Activated naive CD4-positive, alpha-beta T cell treated with anti-CD3 and anti-CD28 coated beads for 36 hours (primary cell): ENCODE measurements at regions of chr13 and their contacts with region 1.

Region 1: DNA sequence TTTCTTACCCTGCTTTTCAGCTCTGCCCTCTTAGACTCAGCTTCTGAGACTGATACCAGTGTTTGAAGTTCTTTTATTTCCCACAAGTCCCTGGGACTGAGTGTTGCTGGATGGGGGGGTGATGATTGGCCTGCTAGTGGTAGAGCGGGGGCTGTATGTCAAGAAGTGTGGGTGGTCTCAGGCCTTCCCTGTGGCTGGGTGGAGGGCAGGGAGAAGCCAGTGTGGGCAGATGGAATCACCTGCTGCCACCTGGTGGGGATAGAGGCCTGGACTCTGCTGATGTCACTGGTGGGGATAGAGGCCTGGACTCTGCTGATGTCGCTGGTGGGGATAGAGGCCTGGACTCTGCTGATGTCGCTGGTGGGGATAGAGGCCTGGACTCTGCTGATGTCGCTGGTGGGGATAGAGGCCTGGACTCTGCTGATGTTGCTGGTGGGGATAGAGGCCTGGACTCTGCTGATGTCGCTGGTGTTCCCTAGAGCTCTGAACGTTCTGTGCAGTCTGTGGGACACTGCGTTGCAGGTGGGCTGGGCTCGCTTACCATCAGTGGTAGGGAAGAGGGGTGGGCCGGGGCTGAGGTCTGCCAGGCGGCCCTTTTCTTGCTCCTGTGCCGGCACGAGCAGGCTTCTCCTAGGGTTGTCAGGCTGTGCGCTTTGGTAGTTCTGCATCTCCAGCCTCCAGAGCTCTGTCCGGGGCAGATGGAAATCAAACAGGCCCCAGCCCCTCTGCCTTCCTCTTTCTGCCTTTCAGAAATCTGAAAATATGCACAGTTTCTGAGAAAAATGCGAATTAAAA is 101.3 kb downstream of the ARHGEF7 start:
- DNase-seq: peak; percentile 62
- H3K4me3 Mint-ChIP-seq: no peak overlapping the region
- H3K27ac Mint-ChIP-seq: no peak overlapping the region
- H3K4me1 Mint-ChIP-seq: peaks cover 27% of the 10 kb centered on the region
- H3K27me3 Mint-ChIP-seq: no peaks in the 10 kb centered on the region

Region 2: DNA sequence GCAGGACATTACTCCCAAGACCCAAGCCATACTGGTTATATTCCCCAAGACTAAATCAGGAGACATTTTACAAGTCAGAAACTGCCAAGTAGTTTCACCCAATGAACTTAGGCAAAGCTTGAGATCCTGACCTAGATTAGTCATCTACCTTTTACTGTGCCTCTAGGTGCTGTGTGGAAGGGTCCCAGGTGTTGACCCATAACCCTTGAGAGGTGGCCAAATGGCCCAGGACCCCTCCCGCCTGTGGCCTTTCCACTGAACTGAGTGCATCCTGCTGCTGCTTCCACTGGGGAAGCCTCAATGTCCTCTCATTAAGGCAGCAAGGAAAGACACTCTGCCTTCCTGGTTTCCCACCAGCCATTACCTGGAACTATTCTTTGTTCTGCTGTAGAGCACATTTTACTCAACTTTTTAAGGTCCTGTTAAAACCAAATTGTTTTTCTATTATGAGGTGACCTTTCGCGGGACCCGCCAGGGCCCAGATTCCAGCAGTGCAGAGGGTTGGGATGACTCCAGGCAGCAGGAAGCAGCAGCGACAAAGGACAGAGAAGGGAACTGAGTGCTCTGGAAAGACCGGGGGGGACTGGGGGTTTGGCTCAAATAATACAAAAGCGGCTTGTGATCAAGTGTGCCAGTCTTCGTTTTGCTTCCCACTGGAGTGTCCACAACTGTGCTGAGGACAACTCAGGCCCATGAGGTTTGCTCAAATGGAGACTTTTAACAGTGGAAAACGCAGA is 328.6 kb before region 1 on chr13:
- CTCF ChIA-PET with region 1: no interaction called
- intact Hi-C with region 1: no loop called
- DNase-seq: no peak
- H3K4me3 Mint-ChIP-seq: no peak overlapping the region
- H3K27ac Mint-ChIP-seq: no peak overlapping the region
- H3K4me1 Mint-ChIP-seq: peaks cover 5% of the 10 kb centered on the region
- H3K27me3 Mint-ChIP-seq: no peaks in the 10 kb centered on the region

Region 3: GRCh38 chr13:111399776-111400538 is 183.6 kb after region 1 on chr13:
- CTCF ChIA-PET with region 1: no interaction called
- intact Hi-C with region 1: loop called (anchors 5 kb)
- DNase-seq: no peak
- H3K4me3 Mint-ChIP-seq: no peak overlapping the region
- H3K27ac Mint-ChIP-seq: no peak overlapping the region
- H3K4me1 Mint-ChIP-seq: no peaks in the 10 kb centered on the region
- H3K27me3 Mint-ChIP-seq: no peaks in the 10 kb centered on the region